HepG2 (cell line): ENCODE measurements at regions of chr2 and their contacts with region 1.

Region 1: GRCh38 chr2:160970052-160970965 is 189.9 kb upstream of the TANK start:
- DNase-seq: peak; percentile 80
- ATAC-seq: peak; percentile 85
- H3K4me3 ChIP-seq: peak overlapping the region; percentile 37 to 62 (median 61); a peak in 5 of 6 replicates
- H3K27ac ChIP-seq: no peak overlapping the region
- H3K4me1 ChIP-seq: no peaks in the 10 kb centered on the region
- H3K27me3 ChIP-seq: no peaks in the 10 kb centered on the region; a peak in 2 of 5 replicates
- CTCF ChIP-seq: peak; percentile 82
- EP300 ChIP-seq: 0 out of 4 replicates have a peak, but pooled peaks of 1 of the 2 experiments have one; percentile 33
- POLR2A ChIP-seq: no peak
- RAD21 ChIP-seq: peak; percentile 87

Region 2: GRCh38 chr2:160210599-160211138 is 759.6 kb before region 1 on chr2:
- CTCF ChIA-PET with region 1: no interaction called
- POLR2A ChIA-PET with region 1: no interaction called
- in situ Hi-C with region 1: no loop called
- intact Hi-C with region 1: loop called (anchors 1 kb)
- DNase-seq: peak; percentile 60
- ATAC-seq: peak; percentile 88
- H3K4me3 ChIP-seq: no peak overlapping the region
- H3K27ac ChIP-seq: no peak overlapping the region
- H3K4me1 ChIP-seq: peaks cover 15% of the 10 kb centered on the region
- H3K27me3 ChIP-seq: peaks cover 0 to 4% of the 10 kb centered on the region in 2 experiments; a peak in 1 of 5 replicates
- CTCF ChIP-seq: peak; percentile 90
- EP300 ChIP-seq: no peak
- POLR2A ChIP-seq: no peak
- RAD21 ChIP-seq: peak; percentile 68

Region 3: DNA sequence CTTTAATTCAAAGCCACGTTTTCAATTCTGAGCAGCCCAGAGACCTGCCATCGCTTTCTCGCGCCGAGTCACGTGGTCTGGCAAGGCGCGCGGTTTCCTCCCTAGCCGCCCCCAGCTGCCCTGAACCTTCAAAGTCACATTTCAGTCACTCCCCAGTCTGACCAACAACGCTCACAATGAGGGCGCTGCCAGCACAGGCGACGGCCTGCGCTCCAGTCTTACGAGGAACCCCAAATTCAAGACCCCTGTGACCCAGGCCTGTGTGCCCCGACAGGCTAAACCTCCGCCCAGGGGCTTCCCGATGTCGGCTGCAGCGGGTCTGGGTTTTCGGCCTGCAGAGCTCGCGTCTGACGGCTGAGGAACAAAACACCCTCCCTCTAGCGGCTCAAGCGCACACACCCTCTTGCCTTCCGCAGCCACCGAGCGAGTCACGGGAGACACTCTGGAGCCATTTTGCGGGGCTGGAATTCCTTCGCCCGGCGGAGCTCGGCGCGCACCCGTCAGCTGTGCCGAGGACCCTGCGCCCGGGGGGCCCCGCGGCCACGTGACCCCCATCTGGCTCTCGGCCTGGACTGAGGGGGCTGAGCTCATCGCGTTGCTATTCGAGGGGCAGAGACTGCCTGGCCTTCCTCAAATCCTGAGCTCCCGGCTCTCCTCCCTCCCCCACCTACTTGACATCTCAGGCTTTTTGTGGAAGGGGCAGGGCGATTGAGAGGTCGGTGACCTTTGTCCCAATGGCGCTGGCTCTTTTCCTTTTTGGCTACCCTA is 700.3 kb before region 1 on chr2:
- CTCF ChIA-PET with region 1: no interaction called
- POLR2A ChIA-PET with region 1: interaction called, 3 read pairs
- in situ Hi-C with region 1: loop called (anchors 25 kb)
- intact Hi-C with region 1: loop called (anchors 5 kb)
- DNase-seq: peak; percentile 77
- ATAC-seq: peak; percentile 96
- H3K4me3 ChIP-seq: peak overlapping the region; percentile 36 to 71 (median 51); a peak in 5 of 6 replicates
- H3K27ac ChIP-seq: peak overlapping the region; percentile 41
- H3K4me1 ChIP-seq: peaks cover 17% of the 10 kb centered on the region
- H3K27me3 ChIP-seq: no peaks in the 10 kb centered on the region; a peak in 1 of 5 replicates
- CTCF ChIP-seq: peak; percentile 79
- EP300 ChIP-seq: no peak
- POLR2A ChIP-seq: no peak; a peak in 3 of 4 replicates
- RAD21 ChIP-seq: peak; percentile 81

Region 4: GRCh38 chr2:160429248-160430000 is 540.9 kb before region 1 on chr2:
- CTCF ChIA-PET with region 1: interaction called, 3 read pairs
- POLR2A ChIA-PET with region 1: no interaction called
- in situ Hi-C with region 1: no loop called
- intact Hi-C with region 1: loop called (anchors 5 kb)
- DNase-seq: peak; percentile 52
- ATAC-seq: peak; percentile 60
- H3K4me3 ChIP-seq: no peak overlapping the region
- H3K27ac ChIP-seq: no peak overlapping the region
- H3K4me1 ChIP-seq: peaks cover 16% of the 10 kb centered on the region
- H3K27me3 ChIP-seq: no peaks in the 10 kb centered on the region
- CTCF ChIP-seq: peak; percentile 32
- EP300 ChIP-seq: no peak
- POLR2A ChIP-seq: no peak
- RAD21 ChIP-seq: no peak

Region 5: DNA sequence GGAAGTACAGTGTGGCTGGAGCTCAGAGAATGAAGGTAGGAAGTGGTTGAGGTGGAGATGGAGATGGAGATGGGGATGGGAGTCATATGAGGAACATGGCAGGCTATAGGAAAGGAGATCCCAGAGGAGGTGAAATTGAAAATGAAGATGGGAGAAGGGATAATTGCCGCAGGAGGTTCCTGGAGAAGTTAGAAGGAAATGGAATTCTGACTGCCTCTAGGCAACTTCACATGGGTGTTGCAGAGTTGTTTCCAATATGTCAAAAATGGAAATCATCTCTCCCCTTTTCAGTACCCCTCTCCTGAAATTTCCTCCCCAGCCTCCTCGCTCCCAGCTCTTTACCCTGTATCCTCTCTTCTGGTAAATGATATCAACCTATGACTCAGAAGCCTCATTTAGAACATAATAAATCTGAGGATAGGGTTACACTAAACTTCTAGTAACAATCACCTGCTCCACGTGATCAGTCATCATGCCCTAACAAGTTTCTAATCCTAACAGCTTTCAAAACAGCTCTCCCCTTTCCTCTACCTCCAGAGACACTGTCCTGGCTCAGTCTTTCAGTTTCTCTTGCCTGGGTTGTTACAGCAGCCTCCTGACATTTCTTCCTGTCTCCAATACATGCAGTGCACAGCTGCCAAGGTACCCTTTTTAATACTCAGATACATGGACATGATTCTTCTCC is 274.8 kb before region 1 on chr2:
- CTCF ChIA-PET with region 1: no interaction called
- POLR2A ChIA-PET with region 1: no interaction called
- in situ Hi-C with region 1: no loop called
- intact Hi-C with region 1: loop called (anchors 10 kb)
- DNase-seq: no peak
- ATAC-seq: no peak
- H3K4me3 ChIP-seq: no peak overlapping the region
- H3K27ac ChIP-seq: no peak overlapping the region
- H3K4me1 ChIP-seq: no peaks in the 10 kb centered on the region
- H3K27me3 ChIP-seq: no peaks in the 10 kb centered on the region; a peak in 1 of 5 replicates
- CTCF ChIP-seq: no peak
- EP300 ChIP-seq: no peak
- POLR2A ChIP-seq: no peak
- RAD21 ChIP-seq: no peak

Region 6: GRCh38 chr2:161238560-161239325 is 268.4 kb after region 1 on chr2:
- CTCF ChIA-PET with region 1: no interaction called
- POLR2A ChIA-PET with region 1: no interaction called
- in situ Hi-C with region 1: no loop called
- intact Hi-C with region 1: no loop called
- DNase-seq: no peak
- ATAC-seq: peak; percentile 63
- H3K4me3 ChIP-seq: peak overlapping the region; percentile 55 to 71 (median 58)
- H3K27ac ChIP-seq: no peak overlapping the region
- H3K4me1 ChIP-seq: peaks cover 12% of the 10 kb centered on the region
- H3K27me3 ChIP-seq: peaks cover under 1 to 11% of the 10 kb centered on the region in 2 experiments; a peak in 3 of 5 replicates
- CTCF ChIP-seq: no peak
- EP300 ChIP-seq: no peak
- POLR2A ChIP-seq: no peak
- RAD21 ChIP-seq: no peak; the same call in 1 of the 2 replicates